GM18951 (cell line): ENCODE measurements at regions of chr11 and their contacts with region 1.

Region 1: DNA sequence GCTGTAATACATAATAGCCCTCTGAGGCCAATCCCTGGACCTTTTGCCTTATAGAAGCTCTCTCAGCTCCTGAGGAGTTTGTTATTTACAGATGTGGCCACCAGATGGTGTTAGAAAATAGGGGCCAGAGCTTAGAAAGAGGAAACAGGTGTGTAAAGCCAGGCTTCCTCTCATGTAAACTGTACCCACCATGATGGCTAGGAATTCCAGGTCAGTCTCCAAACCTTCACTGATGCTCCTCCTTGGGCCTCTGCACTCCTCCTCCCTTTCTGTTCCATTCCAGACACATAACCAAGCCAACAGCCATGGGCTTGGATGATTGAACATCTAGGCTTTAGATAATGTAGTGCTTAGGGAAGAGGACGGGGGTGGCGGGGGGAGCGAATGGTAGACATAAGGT is 39.7 kb downstream of the USP35 start:
- POLR2A ChIP-seq: no peak

Region 2: GRCh38 chr11:78564490-78565467 is 336.3 kb after region 1 on chr11:
- in situ Hi-C with region 1: loop called (anchors 5 kb)
- POLR2A ChIP-seq: no peak

Region 3: GRCh38 chr11:78982473-78982872 is 754.0 kb after region 1 on chr11:
- in situ Hi-C with region 1: no loop called
- POLR2A ChIP-seq: no peak